CD4-positive, alpha-beta memory T cell (primary cell): ENCODE measurements at regions of chr13 and their contacts with region 1.

Region 1: GRCh38 chr13:72781451-72782439 is at the starts of genes DIS3 and PIBF1:
- DNase-seq: peak; percentile 94 to 98 (median 95)
- H3K4me3 ChIP-seq: peak within 1 kb of the TSS; percentile 92 to 96
- H3K4me3 Mint-ChIP-seq: peak within 1 kb of the TSS; percentile 99 to 100 (median 100)
- H3K27ac ChIP-seq: peak within 1 kb of the TSS; percentile 84
- H3K27ac Mint-ChIP-seq: peak within 1 kb of the TSS; percentile 90 to 100 (median 99)
- H3K4me1 ChIP-seq: peaks cover 73% of the 10 kb centered on the region
- H3K4me1 Mint-ChIP-seq: peaks cover 39 to 86% (median 65%) of the 10 kb centered on the region in 4 donors
- H3K27me3 ChIP-seq: no peaks in the 10 kb centered on the region
- H3K27me3 Mint-ChIP-seq: no peaks in the 10 kb centered on the region
- total RNA-seq, gene DIS3: 36.4 to 41.0 TPM
- total RNA-seq, gene PIBF1: 27.9 to 36.0 TPM

Region 2: DNA sequence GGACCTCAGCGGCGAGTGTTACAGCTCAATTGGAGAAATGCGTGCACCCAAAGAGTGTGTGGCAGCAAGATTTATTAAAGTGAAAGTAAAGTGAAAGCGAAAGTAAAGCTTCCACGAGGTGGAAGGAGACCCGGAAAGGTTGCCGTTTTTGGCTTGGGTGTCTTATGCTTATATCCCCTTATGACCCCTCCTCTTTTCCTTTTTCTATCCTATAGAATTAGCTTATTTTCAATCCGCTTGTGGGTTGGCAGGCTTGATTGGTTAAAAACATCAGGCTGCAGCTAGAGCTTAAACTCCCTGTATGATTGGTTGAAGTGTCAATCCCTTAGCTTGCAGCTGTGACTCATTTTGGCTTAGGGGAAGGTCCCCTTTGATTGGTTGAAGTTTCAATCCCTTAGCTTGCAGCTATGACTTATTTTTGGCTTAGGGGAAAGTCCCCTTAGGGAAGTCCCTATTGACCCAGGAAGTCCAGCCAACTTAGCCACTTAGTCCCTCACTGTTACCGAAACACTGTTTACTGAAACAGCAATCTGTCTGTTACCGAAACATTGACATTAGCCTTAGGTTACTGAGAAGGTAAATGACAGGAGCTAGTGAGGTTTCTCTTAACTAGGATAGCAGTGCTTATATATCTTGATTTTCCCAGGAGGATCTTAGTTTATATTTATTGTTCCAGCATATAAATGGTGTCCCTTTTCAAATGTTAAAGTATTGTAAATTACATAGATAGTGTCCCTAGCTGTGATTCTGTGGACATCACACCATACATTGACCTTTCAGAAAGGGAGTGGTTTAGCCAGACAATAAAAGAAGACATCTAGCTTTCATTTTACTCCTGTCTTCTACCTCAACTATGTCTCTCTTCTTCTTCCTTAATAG is 1490.5 kb before region 1 on chr13:
- CTCF ChIA-PET with region 1: no interaction called
- POLR2A ChIA-PET with region 1: no interaction called
- intact Hi-C with region 1: loop called (anchors 2 kb)
- DNase-seq: peak; percentile 71 to 81 (median 79)
- H3K4me3 ChIP-seq: peak overlapping the region; percentile 49 to 63
- H3K4me3 Mint-ChIP-seq: peak overlapping the region; percentile 81 to 92 (median 90)
- H3K27ac ChIP-seq: peak overlapping the region; percentile 47
- H3K27ac Mint-ChIP-seq: peak overlapping the region; percentile 83 to 98 (median 95)
- H3K4me1 ChIP-seq: peaks cover 18% of the 10 kb centered on the region
- H3K4me1 Mint-ChIP-seq: peaks cover 10 to 29% (median 22%) of the 10 kb centered on the region in 4 donors
- H3K27me3 ChIP-seq: no peaks in the 10 kb centered on the region
- H3K27me3 Mint-ChIP-seq: peaks cover 0 to 5% of the 10 kb centered on the region in 2 donors

Region 3: GRCh38 chr13:73058736-73059459 is 277.2 kb after region 1 on chr13 and contains the start of gene KLF5:
- CTCF ChIA-PET with region 1: no interaction called
- POLR2A ChIA-PET with region 1: interaction called, 4 read pairs
- intact Hi-C with region 1: loop called (anchors 1 kb)
- DNase-seq: peak; percentile 93 to 97 (median 94)
- H3K4me3 ChIP-seq: peak within 1 kb of the TSS; percentile 52 to 60
- H3K4me3 Mint-ChIP-seq: peak within 1 kb of the TSS; percentile 87 to 95 (median 92)
- H3K27ac ChIP-seq: no peak within 1 kb of the TSS
- H3K27ac Mint-ChIP-seq: peak within 1 kb of the TSS; percentile 72 to 94 (median 84)
- H3K4me1 ChIP-seq: peaks cover 19% of the 10 kb centered on the region
- H3K4me1 Mint-ChIP-seq: peaks cover 14 to 30% (median 18%) of the 10 kb centered on the region in 4 donors
- H3K27me3 ChIP-seq: peaks cover 11% of the 10 kb centered on the region
- H3K27me3 Mint-ChIP-seq: peaks cover 10 to 13% of the 10 kb centered on the region in 2 donors
- total RNA-seq, gene KLF5: 5.0 to 5.4 TPM